Heart left ventricle (tissue), 16 donors: ENCODE measurements at regions of chr21 and their contacts with region 1.

Region 1: DNA sequence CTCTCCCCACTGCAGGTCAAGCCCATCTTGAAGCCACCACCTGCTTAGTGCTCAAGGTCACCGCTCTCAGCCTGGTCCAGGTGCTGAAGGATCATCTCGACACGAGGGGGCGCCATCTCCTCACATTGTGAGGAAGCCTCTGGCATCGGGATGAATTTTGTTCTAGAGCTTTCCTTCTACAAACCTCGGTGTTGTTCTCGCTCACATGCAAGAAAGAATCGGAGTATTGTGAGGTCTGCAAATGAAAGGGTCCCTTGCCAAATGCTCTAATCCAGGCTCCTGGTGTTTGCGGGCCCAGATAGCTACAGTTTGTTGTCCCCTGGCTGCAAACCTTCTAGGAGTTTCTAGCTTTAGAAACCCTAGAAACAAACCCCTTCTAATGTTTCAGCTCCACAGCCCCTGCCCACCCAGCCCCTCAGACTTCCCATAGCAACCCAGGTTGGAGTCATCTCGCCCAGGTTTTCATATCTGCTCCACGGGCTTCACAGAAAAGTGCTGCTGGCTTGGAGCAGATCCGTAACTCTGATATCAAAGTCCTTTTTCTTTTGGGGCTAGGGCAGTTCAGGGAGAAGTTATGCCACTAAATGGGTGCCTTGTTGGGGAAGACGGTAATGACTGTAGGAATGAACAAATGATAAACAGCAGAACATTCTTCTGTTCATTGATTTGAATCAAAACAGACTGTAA is 8.6 kb upstream of the ATP5PO start:
- DNase-seq: peak; percentile 85 to 93 (median 87)
- ATAC-seq: peak; percentile 79 to 98 (median 97)
- H3K4me3 ChIP-seq: peak overlapping the region in 1 of 12 donors; percentile 15
- H3K27ac ChIP-seq: peak overlapping the region in 1 of 12 donors; percentile 53
- H3K4me1 ChIP-seq: peaks cover 0 to 10% (median 5%) of the 10 kb centered on the region in 12 donors
- H3K27me3 ChIP-seq: no peaks in the 10 kb centered on the region
- CTCF ChIP-seq: peak; percentile 88 to 96 (median 90)
- POLR2A ChIP-seq: no peak

Region 2: GRCh38 chr21:33993286-33994231 is 69.3 kb after region 1 on chr21:
- intact Hi-C with region 1: no loop called
- DNase-seq: peak in 3 of 5 donors; percentile 31 to 42 (median 34)
- ATAC-seq: peak in 1 of 4 donors; percentile 68
- H3K4me3 ChIP-seq: no peak overlapping the region
- H3K27ac ChIP-seq: peak overlapping the region in 2 of 12 donors; percentile 19 to 42
- H3K4me1 ChIP-seq: peaks cover 0 to 10% (median 0%) of the 10 kb centered on the region in 12 donors
- H3K27me3 ChIP-seq: no peaks in the 10 kb centered on the region
- CTCF ChIP-seq: no peak
- POLR2A ChIP-seq: no peak

Region 3: GRCh38 chr21:34202553-34203372 is 278.5 kb after region 1 on chr21:
- intact Hi-C with region 1: loop called in 9 of 10 experiments (anchors 2 to 10 kb)
- DNase-seq: peak in 1 of 5 donors; percentile 26
- ATAC-seq: no peak
- H3K4me3 ChIP-seq: peak overlapping the region in 4 of 12 donors; percentile 5 to 56 (median 30)
- H3K27ac ChIP-seq: peak overlapping the region in 2 of 12 donors; percentile 37 to 79
- H3K4me1 ChIP-seq: peaks cover 0 to 63% (median 14%) of the 10 kb centered on the region in 12 donors
- H3K27me3 ChIP-seq: no peaks in the 10 kb centered on the region
- CTCF ChIP-seq: no peak
- POLR2A ChIP-seq: no peak

Region 4: DNA sequence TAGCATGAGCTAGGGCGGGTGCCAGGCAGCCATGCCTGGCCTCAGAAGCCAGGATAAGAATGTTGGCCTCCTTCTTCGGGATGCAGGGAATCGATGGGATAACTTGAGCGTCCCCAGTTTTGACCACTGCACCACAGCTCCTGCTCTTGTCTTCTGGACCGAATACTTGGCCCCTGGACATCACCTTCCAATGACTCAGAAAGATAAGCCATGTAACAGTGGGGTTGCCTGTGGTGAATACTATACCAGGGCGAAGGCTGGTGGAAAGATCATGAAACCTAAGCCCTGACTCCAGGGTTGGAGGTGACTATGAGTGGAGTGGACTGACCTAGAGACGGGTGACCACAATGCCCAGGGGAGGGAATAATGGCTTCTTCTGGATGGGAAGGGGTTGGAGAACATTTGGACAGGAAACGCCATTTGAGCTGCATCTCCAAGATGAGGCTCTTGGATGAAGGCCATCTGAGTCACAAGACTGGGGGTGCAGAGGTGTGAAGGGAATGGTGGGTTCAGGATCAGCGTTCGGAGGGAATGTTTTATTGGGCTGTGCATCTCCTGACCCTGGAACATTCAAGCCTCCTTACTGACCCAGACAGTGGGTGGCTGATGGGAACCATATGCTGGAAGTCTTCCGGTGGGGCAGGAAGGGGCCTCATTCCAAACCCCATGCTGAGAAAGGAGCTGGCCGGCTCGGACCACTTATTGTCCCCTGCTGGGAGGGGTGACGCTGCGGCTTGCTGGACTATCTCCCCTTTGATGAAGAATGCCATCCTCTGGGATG is 421.1 kb after region 1 on chr21:
- intact Hi-C with region 1: loop called in 9 of 10 experiments (anchors 2 kb)
- DNase-seq: peak in 4 of 5 donors; percentile 45 to 49 (median 47)
- ATAC-seq: peak in 3 of 4 donors; percentile 32 to 53 (median 46)
- H3K4me3 ChIP-seq: no peak overlapping the region
- H3K27ac ChIP-seq: peak overlapping the region in 7 of 12 donors; percentile 13 to 73 (median 60)
- H3K4me1 ChIP-seq: peaks cover 0 to 43% (median 14%) of the 10 kb centered on the region in 12 donors
- H3K27me3 ChIP-seq: no peaks in the 10 kb centered on the region
- CTCF ChIP-seq: no peak
- POLR2A ChIP-seq: no peak

Region 5: GRCh38 chr21:34351786-34352241 is 427.6 kb after region 1 on chr21:
- intact Hi-C with region 1: loop called (anchors 2 kb)
- DNase-seq: peak in 4 of 5 donors; percentile 36 to 70 (median 48)
- ATAC-seq: peak; percentile 73 to 88 (median 86)
- H3K4me3 ChIP-seq: no peak overlapping the region
- H3K27ac ChIP-seq: no peak overlapping the region
- H3K4me1 ChIP-seq: peaks cover 0 to 12% (median 2%) of the 10 kb centered on the region in 12 donors
- H3K27me3 ChIP-seq: no peaks in the 10 kb centered on the region
- CTCF ChIP-seq: peak; percentile 42 to 78 (median 70)
- POLR2A ChIP-seq: no peak

Region 6: DNA sequence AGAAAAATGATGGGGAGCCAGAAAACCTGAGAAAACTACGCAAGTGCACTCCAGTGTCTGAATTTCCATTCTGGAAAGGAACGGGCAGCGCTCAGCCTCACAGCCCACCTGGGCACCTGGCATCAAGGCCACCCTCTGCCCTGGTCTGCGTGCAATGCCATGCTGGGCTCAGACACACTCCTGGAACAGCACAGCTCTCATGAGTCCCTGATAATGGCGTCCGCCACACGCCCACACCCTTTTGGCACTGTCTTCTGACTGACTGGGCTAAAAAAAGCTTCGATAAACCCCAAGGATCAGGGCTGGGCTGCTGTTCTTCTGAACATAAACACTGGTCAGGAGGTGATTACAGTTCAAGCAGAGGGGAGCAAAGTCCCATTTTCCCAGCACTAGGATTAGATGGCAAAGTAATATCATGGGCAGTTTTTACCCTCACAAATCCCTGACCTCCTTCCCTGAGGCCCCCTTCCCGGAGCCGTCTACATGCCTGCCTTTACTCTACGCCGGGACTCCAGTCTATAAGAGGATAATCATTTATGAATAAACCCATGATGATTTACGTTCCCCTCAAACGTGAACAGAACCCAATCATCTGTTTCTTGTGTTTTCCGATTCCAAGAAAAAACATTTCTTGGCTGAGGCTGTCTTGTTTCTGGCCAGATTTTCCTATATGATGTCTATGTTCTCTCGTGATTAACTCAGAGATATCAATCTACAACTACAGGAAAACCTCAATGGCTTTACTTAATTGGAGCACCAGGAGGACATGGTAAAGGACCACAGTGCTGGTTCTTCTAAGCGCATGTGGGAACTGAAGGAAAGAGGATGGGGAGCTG is 668.1 kb after region 1 on chr21:
- intact Hi-C with region 1: loop called in 1 of 10 experiments (anchors 10 kb)
- DNase-seq: peak; percentile 72 to 86 (median 79)
- ATAC-seq: peak; percentile 94 to 96 (median 95)
- H3K4me3 ChIP-seq: peak overlapping the region in 6 of 12 donors; percentile 2 to 28 (median 16)
- H3K27ac ChIP-seq: peak overlapping the region; percentile 33 to 85 (median 72)
- H3K4me1 ChIP-seq: peaks cover 8 to 75% (median 38%) of the 10 kb centered on the region in 12 donors
- H3K27me3 ChIP-seq: no peaks in the 10 kb centered on the region
- CTCF ChIP-seq: no peak
- POLR2A ChIP-seq: peak in 1 of 2 donors; percentile 30

Region 7: GRCh38 chr21:34619841-34620665 is 695.8 kb after region 1 on chr21:
- intact Hi-C with region 1: loop called in 1 of 10 experiments (anchors 10 kb)
- DNase-seq: peak in 4 of 5 donors; percentile 21 to 52 (median 43)
- ATAC-seq: peak; percentile 71 to 89 (median 87)
- H3K4me3 ChIP-seq: no peak overlapping the region
- H3K27ac ChIP-seq: peak overlapping the region in 9 of 12 donors; percentile 51 to 73 (median 65)
- H3K4me1 ChIP-seq: peaks cover 0 to 42% (median 13%) of the 10 kb centered on the region in 12 donors
- H3K27me3 ChIP-seq: no peaks in the 10 kb centered on the region
- CTCF ChIP-seq: no peak
- POLR2A ChIP-seq: no peak